Motor neuron (in vitro differentiated cells): ENCODE measurements at regions of chr5 and their contacts with region 1.

Region 1: GRCh38 chr5:140157032-140157803 is 17.8 kb upstream of the CYSTM1 start:
- ATAC-seq: peak; percentile 89 to 99 (median 96)
- H3K4me3 ChIP-seq: peak overlapping the region in 2 of 5 donors; percentile 1 to 10
- H3K27ac ChIP-seq: no peak overlapping the region
- H3K4me1 ChIP-seq: peaks cover 0 to 15% of the 10 kb centered on the region in 2 donors

Region 2: DNA sequence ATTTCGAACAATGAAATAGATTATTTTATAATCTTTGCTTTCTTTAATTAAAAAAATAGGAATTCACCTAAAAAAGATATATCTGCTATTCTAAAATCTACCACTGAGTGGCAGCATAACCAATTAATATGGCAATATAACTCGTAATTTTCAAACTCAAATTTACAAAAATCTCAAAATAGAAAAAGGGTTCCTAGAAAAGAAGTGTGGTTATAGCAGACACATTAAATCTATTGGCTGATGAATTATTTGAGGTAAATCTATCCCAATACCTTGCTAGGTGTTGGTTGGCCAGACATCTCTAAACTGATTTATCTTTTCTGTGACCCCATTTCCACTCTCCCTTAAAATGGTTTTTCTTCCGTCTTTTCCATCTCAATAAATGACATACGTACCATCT is 83.9 kb before region 1 on chr5:
- in situ Hi-C with region 1: loop called in 6 of 9 experiments (anchors 10 to 25 kb)
- ATAC-seq: no peak
- H3K4me3 ChIP-seq: no peak overlapping the region
- H3K27ac ChIP-seq: no peak overlapping the region
- H3K4me1 ChIP-seq: no peaks in the 10 kb centered on the region